MCF 10A (cell line): ENCODE measurements at regions of chr11 and their contacts with region 1.

Region 1: GRCh38 chr11:63958008-63958407 is 16.4 kb upstream of the COX8A start:
- DNase-seq: no peak
- H3K4me3 Mint-ChIP-seq: no peak overlapping the region
- H3K27ac Mint-ChIP-seq: no peak overlapping the region
- H3K4me1 Mint-ChIP-seq: peaks cover 5% of the 10 kb centered on the region
- H3K27me3 Mint-ChIP-seq: no peaks in the 10 kb centered on the region
- CTCF ChIP-seq: no peak

Region 2: DNA sequence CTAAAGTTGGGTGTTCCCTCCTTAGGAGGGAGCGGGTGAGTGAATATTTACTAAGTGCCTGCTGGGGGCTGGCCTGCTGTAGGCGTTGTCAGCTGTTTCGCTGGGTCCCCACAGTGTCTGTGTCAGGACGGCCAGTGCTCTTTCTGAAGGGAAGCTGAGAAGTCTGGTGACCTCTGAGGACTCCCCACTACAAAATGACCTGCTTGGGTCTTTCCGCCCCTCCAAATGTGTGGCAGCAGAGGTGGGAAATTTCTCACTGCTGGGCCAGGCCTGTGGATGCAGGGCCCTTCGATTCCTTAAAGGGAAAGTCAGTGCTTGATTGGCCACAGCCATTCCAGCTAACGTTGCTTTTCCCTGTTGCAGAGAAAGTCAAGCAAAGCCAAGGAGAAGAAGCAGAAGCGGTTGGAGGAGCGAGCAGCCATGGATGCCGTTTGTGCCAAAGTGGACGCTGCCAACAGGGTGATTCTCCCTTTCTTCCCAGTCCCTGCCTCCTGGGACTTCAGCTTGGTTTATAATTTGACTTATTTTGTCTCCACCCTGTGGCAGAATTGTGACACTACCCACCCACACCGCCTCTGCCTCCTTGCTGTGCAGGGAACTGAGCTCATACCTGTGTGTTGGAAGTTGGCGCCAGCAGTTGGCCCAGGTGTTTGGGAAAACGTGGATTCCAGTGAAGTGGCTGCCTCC is 12.4 kb before region 1 on chr11:
- CTCF ChIA-PET with region 1: interaction called, 15 read pairs
- POLR2A ChIA-PET with region 1: no interaction called
- intact Hi-C with region 1: no loop called
- DNase-seq: peak; percentile 75
- H3K4me3 Mint-ChIP-seq: no peak overlapping the region
- H3K27ac Mint-ChIP-seq: no peak overlapping the region
- H3K4me1 Mint-ChIP-seq: no peaks in the 10 kb centered on the region
- H3K27me3 Mint-ChIP-seq: no peaks in the 10 kb centered on the region
- CTCF ChIP-seq: peak; percentile 63

Region 3: GRCh38 chr11:64878494-64879243 is 920.7 kb after region 1 on chr11 and contains the start of gene EHD1:
- CTCF ChIA-PET with region 1: no interaction called
- POLR2A ChIA-PET with region 1: no interaction called
- intact Hi-C with region 1: no loop called
- DNase-seq: peak; percentile 98
- H3K4me3 Mint-ChIP-seq: peak within 1 kb of the TSS; percentile 95
- H3K27ac Mint-ChIP-seq: peak within 1 kb of the TSS; percentile 95
- H3K4me1 Mint-ChIP-seq: peaks cover 22% of the 10 kb centered on the region
- H3K27me3 Mint-ChIP-seq: no peaks in the 10 kb centered on the region
- CTCF ChIP-seq: peak; percentile 27
- total RNA-seq, gene EHD1: 67.9 and 80.6 TPM in 2 replicates